ENCODE measurements at regions of chr15 and their contacts with region 1.

Region 1: DNA sequence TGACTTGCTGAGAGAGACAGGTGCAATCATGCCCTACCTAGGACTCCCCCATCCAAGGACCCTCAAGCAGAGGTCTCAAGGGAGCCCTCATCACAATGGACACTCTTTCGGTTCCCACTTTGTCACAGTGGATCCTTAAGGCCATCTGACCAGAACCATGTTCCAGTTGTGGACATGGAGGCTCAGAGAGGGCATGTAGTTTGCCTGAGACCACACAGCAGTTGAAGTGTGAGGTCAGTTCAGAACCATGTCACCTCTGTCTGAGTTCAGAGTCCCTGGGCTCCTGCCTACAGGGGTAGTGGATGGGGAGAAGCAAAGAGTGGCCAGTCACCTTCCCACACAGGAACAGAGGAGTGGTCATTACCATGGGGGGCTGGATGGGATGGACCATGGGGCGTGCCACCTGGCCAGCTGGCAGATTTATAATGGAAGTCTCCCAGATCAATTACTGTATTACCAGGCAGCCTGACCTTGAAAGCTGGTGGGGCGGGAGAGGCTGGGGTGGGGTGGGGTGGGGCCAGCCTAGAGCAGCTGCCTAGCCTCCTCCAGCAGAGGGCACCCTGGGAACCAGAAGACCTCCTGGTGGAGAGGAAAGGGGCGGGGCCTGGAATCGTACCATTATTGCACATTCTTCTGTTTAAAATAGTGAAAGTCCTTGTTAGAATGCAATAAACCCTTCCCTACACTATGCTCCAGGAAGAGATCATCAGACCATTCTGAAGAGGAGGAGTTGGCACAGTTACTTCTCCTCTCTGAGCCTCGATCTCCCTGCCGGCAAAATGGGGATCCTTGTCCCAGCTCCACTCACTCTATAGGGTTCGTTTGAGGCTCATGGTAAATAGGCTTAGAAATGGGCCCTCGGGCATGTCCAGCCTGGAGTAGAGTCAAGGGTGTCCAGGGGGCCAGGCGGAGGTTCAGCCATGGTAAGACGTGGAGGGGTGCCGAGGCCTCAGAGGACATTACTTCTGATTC is 26.9 kb upstream of the LINGO1 start:
- H3K4me3 ChIP-seq: no peak overlapping the region
- H3K27ac ChIP-seq: no peak overlapping the region
- H3K4me1 ChIP-seq: no peaks in the 10 kb centered on the region
- CTCF ChIP-seq: no peak

Region 2: DNA sequence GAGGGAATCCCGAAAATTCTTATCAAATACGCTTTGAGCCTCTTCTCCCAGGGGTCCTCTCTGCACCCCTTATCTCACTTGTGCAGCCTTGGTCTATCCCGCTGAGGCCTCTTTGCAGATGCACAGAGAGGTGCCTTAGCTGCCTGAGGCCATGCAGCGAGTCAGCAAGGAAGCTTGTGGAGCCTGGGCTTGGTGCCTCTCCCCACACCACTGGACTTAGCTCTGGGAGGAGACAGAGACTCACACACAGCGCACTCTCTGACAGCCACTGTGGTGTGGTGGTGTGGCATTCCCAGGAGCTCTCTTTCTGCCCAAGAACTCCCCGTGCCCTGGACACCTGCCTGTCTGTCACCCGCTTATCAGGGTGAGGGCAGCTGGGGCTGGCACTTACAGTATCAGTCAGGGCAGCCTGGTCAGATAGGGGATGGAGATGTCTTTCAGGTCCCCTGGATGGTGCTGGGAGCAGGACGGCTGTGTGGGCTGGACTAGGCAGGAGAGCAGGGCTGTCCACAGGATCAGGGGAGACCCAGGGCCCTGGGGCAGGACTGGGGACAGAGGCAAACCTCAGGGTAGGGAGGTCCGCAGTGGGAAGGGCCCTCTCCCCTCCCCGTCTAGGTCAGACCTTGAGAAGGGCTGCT is 16.7 kb before region 1 on chr15:
- CTCF ChIA-PET with region 1: interaction called, 12 read pairs
- POLR2A ChIA-PET with region 1: interaction called, 4 read pairs
- H3K4me3 ChIP-seq: no peak overlapping the region
- H3K27ac ChIP-seq: no peak overlapping the region
- H3K4me1 ChIP-seq: no peaks in the 10 kb centered on the region
- CTCF ChIP-seq: no peak

Measured in HEK293 (cell line).